AG04449 (cell line): ENCODE measurements at regions of chr13 and their contacts with region 1.

Region 1: DNA sequence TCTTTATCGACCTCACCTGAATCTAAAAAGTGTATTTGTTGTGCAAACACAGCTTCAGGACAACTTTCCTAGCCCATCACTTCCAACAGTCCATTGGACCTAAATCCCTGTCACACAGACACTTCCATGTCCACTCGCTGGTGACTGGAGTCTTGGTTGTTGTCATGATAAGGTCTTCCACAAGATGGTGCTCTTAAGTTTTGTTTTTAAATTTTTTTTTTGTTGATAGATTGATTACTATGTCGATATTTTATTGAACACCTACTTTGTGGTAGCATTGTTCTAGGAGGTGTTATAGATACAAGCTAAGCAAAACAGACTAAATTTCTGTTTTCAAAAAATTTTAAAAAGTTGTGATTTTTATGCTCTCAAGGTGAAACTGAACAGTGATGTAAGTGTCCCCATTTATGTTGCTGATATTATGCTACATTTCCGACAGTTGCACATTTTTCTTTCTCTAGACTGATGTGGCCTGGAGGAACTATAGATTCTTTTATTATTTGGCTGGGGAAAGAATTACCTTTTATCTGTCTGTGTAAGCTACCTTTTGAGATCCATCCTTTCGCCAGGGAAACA is 8.1 kb upstream of the ERICH6B start:
- DNase-seq: no peak
- H3K4me3 ChIP-seq: no peak overlapping the region
- CTCF ChIP-seq: peak; percentile 31

Region 2: DNA sequence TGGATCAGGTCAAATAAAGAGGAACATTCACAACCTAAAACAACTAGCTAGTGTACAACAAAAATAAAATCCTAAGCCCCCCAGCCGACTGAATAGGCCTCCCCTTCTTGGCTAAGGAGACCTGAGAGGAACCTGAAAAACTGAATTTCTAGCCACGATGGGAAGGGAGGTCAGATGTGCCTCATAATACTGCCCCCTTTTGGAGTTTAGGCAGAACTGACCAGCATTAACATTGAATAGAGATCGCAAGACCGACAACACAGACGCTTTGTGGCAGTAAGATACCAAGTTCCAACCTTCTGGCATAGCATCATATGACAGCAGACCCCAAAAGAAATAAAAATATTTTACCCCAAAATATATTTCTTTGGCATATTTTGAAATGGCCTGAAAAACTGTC is 94.5 kb after region 1 on chr13:
- CTCF ChIA-PET with region 1: interaction called, 35 read pairs
- POLR2A ChIA-PET with region 1: no interaction called
- DNase-seq: no peak
- H3K4me3 ChIP-seq: no peak overlapping the region
- CTCF ChIP-seq: peak; percentile 58